Head of caudate nucleus (tissue), 42 donors: ENCODE measurements at regions of chr19 and their contacts with region 1.

Region 1: GRCh38 chr19:17266975-17267788 is at the start of gene BABAM1:
- DNase-seq: peak; percentile 92 to 100 (median 98)

Region 2: GRCh38 chr19:17226002-17226933 is 40.9 kb before region 1 on chr19 and contains the start of gene OCEL1:
- intact Hi-C with region 1: loop called (anchors 5 kb)
- DNase-seq: peak; percentile 97 to 100 (median 99)

Region 3: DNA sequence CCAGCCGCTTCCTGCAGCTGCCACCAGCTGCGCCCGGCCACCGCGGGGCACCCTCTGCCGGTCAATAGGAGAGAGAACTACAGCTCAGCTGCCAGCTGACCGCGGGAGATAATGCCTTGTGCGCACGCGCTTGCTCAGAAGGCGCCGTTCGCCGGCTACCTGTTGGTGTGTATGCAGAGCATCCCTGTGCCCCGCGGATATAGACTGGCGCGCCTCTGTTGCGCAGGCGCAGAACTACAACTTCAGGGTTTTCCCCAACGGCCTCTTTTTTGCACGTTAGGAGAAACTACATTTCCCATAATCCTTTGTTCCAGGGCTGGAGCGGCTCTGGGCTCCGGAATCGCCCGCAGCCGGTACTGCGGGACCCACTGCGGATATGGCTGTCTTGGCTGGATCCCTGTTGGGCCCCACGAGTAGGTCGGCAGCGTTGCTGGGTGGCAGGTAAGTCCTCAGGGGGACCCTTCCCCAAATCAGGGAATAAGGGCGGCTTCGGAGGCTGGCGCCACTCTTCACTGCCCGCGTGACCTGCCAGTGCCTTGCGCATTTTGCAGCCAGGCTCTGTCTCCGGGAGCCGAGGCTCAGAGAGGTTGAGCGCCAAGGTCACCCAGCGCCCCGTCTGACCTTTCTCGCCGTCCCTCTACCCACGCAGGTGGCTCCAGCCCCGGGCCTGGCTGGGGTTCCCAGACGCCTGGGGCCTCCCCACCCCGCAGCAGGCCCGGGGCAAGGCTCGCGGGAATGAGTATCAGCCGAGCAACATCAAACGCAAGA is 38.5 kb after region 1 on chr19 and contains the start of gene MRPL34:
- intact Hi-C with region 1: loop called (anchors 5 kb)
- DNase-seq: peak in 41 of 42 donors; percentile 91 to 98 (median 96)